HepG2 (cell line): ENCODE measurements at regions of chr5 and their contacts with region 1.

Region 1: DNA sequence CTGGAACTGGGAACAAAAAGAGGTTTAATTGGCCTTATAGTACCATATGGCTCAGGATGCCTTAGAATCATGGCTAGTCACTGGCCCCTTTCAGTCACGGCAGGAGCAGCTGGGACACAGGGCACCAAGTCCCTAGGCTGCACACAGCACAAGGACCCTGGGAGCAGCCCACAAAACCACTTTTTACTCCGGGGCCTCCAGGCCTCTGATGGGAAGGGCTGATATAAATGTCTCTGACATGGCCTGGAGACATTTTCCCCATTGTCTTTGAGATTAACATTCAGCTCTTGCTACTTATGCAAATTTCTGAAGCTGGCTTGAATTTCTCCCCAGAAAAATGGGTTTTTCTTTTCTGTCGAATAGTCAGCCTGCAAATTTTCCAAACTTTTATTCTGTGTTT is 1026.4 kb upstream of the COX7C start:
- DNase-seq: no peak
- ATAC-seq: no peak
- H3K4me3 ChIP-seq: no peak overlapping the region
- H3K27ac ChIP-seq: no peak overlapping the region
- H3K4me1 ChIP-seq: no peaks in the 10 kb centered on the region
- H3K27me3 ChIP-seq: no peaks in the 10 kb centered on the region
- CTCF ChIP-seq: no peak
- EP300 ChIP-seq: no peak
- POLR2A ChIP-seq: no peak
- RAD21 ChIP-seq: no peak

Region 2: DNA sequence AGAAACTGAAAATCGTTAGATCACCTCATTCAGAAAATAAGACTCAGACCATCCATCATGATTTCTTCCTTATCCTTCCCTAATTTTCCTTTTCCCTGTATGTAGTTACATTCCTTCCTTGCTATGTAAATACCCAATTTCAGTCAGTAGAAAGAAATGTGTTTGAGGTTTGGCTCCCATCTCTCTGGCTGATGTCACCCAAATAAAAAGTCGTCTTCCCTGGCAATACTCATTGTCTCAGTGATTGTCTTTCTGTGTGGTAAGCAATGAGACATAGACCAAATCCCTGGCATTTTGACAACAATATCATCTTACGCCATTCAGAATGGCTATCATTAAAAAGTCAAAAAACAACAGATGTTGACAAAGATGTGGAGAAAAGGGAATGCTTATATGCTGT is 902.7 kb before region 1 on chr5:
- CTCF ChIA-PET with region 1: no interaction called
- POLR2A ChIA-PET with region 1: no interaction called
- in situ Hi-C with region 1: no loop called
- intact Hi-C with region 1: no loop called
- DNase-seq: no peak
- ATAC-seq: no peak
- H3K4me3 ChIP-seq: no peak overlapping the region
- H3K27ac ChIP-seq: no peak overlapping the region
- H3K4me1 ChIP-seq: no peaks in the 10 kb centered on the region
- H3K27me3 ChIP-seq: no peaks in the 10 kb centered on the region
- CTCF ChIP-seq: no peak
- EP300 ChIP-seq: no peak
- POLR2A ChIP-seq: no peak
- RAD21 ChIP-seq: no peak

Region 3: GRCh38 chr5:85671223-85671970 is 80.1 kb after region 1 on chr5:
- CTCF ChIA-PET with region 1: no interaction called
- POLR2A ChIA-PET with region 1: no interaction called
- in situ Hi-C with region 1: no loop called
- intact Hi-C with region 1: no loop called
- DNase-seq: no peak
- ATAC-seq: no peak
- H3K4me3 ChIP-seq: no peak overlapping the region
- H3K27ac ChIP-seq: no peak overlapping the region
- H3K4me1 ChIP-seq: peaks cover 13% of the 10 kb centered on the region
- H3K27me3 ChIP-seq: no peaks in the 10 kb centered on the region
- CTCF ChIP-seq: no peak
- EP300 ChIP-seq: no peak
- POLR2A ChIP-seq: no peak
- RAD21 ChIP-seq: no peak

Region 4: GRCh38 chr5:86968301-86968753 is 1377.0 kb after region 1 on chr5:
- CTCF ChIA-PET with region 1: no interaction called
- POLR2A ChIA-PET with region 1: no interaction called
- in situ Hi-C with region 1: no loop called
- intact Hi-C with region 1: loop called (anchors 10 kb)
- DNase-seq: peak; percentile 20
- ATAC-seq: peak; percentile 74
- H3K4me3 ChIP-seq: no peak overlapping the region
- H3K27ac ChIP-seq: no peak overlapping the region
- H3K4me1 ChIP-seq: peaks cover 6% of the 10 kb centered on the region; the same call in 1 of the 2 replicates
- H3K27me3 ChIP-seq: no peaks in the 10 kb centered on the region
- CTCF ChIP-seq: peak; percentile 36
- EP300 ChIP-seq: no peak
- POLR2A ChIP-seq: no peak
- RAD21 ChIP-seq: no peak